ENCODE measurements at regions of chr22 and their contacts with region 1.

Region 1: GRCh38 chr22:26483439-26484359 is at the starts of genes HPS4 and SRRD:
- DNase-seq: peak; percentile 86 to 96 (median 91)
- ATAC-seq: peak; percentile 82 to 86 (median 84)
- H3K4me3 ChIP-seq: peak within 1 kb of the TSS; percentile 83 to 93
- H3K4me3 Mint-ChIP-seq: peak within 1 kb of the TSS; percentile 89 to 90 (median 89)
- H3K27ac ChIP-seq: peak within 1 kb of the TSS; percentile 93
- H3K27ac Mint-ChIP-seq: peak within 1 kb of the TSS; percentile 93 to 95
- H3K4me1 ChIP-seq: peaks cover 27 to 47% of the 10 kb centered on the region in 2 experiments
- H3K4me1 Mint-ChIP-seq: peaks cover 70 to 76% (median 71%) of the 10 kb centered on the region in 3 donors
- H3K27me3 ChIP-seq: no peaks in the 10 kb centered on the region
- H3K27me3 Mint-ChIP-seq: no peaks in the 10 kb centered on the region
- total RNA-seq, gene HPS4: 38.7 to 53.4 (median 50.0) TPM
- total RNA-seq, gene SRRD: 17.4 to 23.3 (median 21.8) TPM

Region 2: GRCh38 chr22:26502688-26503561 is 19.2 kb after region 1 on chr22:
- CTCF ChIA-PET with region 1: interaction called, 4 to 10 read pairs
- POLR2A ChIA-PET with region 1: interaction called, 3 to 7 read pairs
- DNase-seq: peak; percentile 26 to 81 (median 58)
- ATAC-seq: peak; percentile 76 to 95 (median 92)
- H3K4me3 ChIP-seq: no peak overlapping the region
- H3K4me3 Mint-ChIP-seq: peak overlapping the region in 2 of 3 donors; percentile 28 to 52
- H3K27ac ChIP-seq: peak overlapping the region; percentile 52
- H3K27ac Mint-ChIP-seq: peak overlapping the region; percentile 68 to 76
- H3K4me1 ChIP-seq: peaks cover 5 to 18% of the 10 kb centered on the region in 2 experiments
- H3K4me1 Mint-ChIP-seq: peaks cover 18 to 31% (median 24%) of the 10 kb centered on the region in 3 donors
- H3K27me3 ChIP-seq: no peaks in the 10 kb centered on the region
- H3K27me3 Mint-ChIP-seq: no peaks in the 10 kb centered on the region

Region 3: GRCh38 chr22:26589845-26590736 is 106.4 kb after region 1 on chr22 and contains the start of gene TPST2:
- CTCF ChIA-PET with region 1: no interaction called
- POLR2A ChIA-PET with region 1: no interaction called
- DNase-seq: peak; percentile 47 to 91 (median 70)
- ATAC-seq: peak; percentile 82 to 90 (median 86)
- H3K4me3 ChIP-seq: peak within 1 kb of the TSS; percentile 76 to 82
- H3K4me3 Mint-ChIP-seq: peak within 1 kb of the TSS; percentile 84 to 96 (median 93)
- H3K27ac ChIP-seq: peak within 1 kb of the TSS; percentile 66
- H3K27ac Mint-ChIP-seq: peak within 1 kb of the TSS; percentile 89 to 93
- H3K4me1 ChIP-seq: peaks cover 31 to 80% of the 10 kb centered on the region in 2 experiments
- H3K4me1 Mint-ChIP-seq: peaks cover 63 to 81% (median 72%) of the 10 kb centered on the region in 3 donors
- H3K27me3 ChIP-seq: no peaks in the 10 kb centered on the region
- H3K27me3 Mint-ChIP-seq: no peaks in the 10 kb centered on the region
- total RNA-seq, gene TPST2: 30.3 to 42.1 (median 38.0) TPM

Region 4: GRCh38 chr22:26619516-26619915 is 135.8 kb after region 1 on chr22:
- CTCF ChIA-PET with region 1: no interaction called
- POLR2A ChIA-PET with region 1: no interaction called
- DNase-seq: no peak
- ATAC-seq: no peak
- H3K4me3 ChIP-seq: no peak overlapping the region
- H3K4me3 Mint-ChIP-seq: no peak overlapping the region
- H3K27ac ChIP-seq: no peak overlapping the region
- H3K27ac Mint-ChIP-seq: no peak overlapping the region
- H3K4me1 ChIP-seq: peaks cover 0 to 16% of the 10 kb centered on the region in 2 experiments
- H3K4me1 Mint-ChIP-seq: peaks cover 0 to 19% (median 11%) of the 10 kb centered on the region in 3 donors
- H3K27me3 ChIP-seq: peaks cover 0 to 5% of the 10 kb centered on the region in 2 experiments
- H3K27me3 Mint-ChIP-seq: no peaks in the 10 kb centered on the region

Region 5: GRCh38 chr22:26672590-26673468 is 189.1 kb after region 1 on chr22:
- CTCF ChIA-PET with region 1: interaction called in 1 of 2 experiments, 15 read pairs
- POLR2A ChIA-PET with region 1: interaction called in 1 of 2 experiments, 4 read pairs
- DNase-seq: peak; percentile 86 to 95 (median 90)
- ATAC-seq: peak; percentile 74 to 79 (median 78)
- H3K4me3 ChIP-seq: peak overlapping the region; percentile 87 to 92
- H3K4me3 Mint-ChIP-seq: peak overlapping the region; percentile 93 to 94 (median 94)
- H3K27ac ChIP-seq: peak overlapping the region; percentile 93
- H3K27ac Mint-ChIP-seq: peak overlapping the region; percentile 97 to 99
- H3K4me1 ChIP-seq: peaks cover 42 to 97% of the 10 kb centered on the region in 2 experiments
- H3K4me1 Mint-ChIP-seq: peaks cover 76 to 88% (median 88%) of the 10 kb centered on the region in 3 donors
- H3K27me3 ChIP-seq: no peaks in the 10 kb centered on the region
- H3K27me3 Mint-ChIP-seq: no peaks in the 10 kb centered on the region

Measured in T-cell (primary cell).